Activated CD4-positive, alpha-beta memory T cell treated with anti-CD3 and anti-CD28 coated beads, Interleukin-2, amount 10 ng/mL, durations not matched to agents 7 days and 5 days (primary cell): ENCODE measurements at regions of chr9 and their contacts with region 1.

Region 1: GRCh38 chr9:36873247-36873875 is 160.7 kb downstream of the PAX5 start:
- DNase-seq: peak; percentile 73
- H3K4me3 Mint-ChIP-seq: no peak overlapping the region
- H3K27ac Mint-ChIP-seq: no peak overlapping the region
- H3K4me1 Mint-ChIP-seq: no peaks in the 10 kb centered on the region
- H3K27me3 Mint-ChIP-seq: peaks cover 7% of the 10 kb centered on the region

Region 2: GRCh38 chr9:36530224-36530623 is 343.1 kb before region 1 on chr9:
- CTCF ChIA-PET with region 1: no interaction called
- POLR2A ChIA-PET with region 1: no interaction called
- DNase-seq: no peak
- H3K4me3 Mint-ChIP-seq: no peak overlapping the region
- H3K27ac Mint-ChIP-seq: no peak overlapping the region
- H3K4me1 Mint-ChIP-seq: no peaks in the 10 kb centered on the region
- H3K27me3 Mint-ChIP-seq: peaks cover 12% of the 10 kb centered on the region

Region 3: DNA sequence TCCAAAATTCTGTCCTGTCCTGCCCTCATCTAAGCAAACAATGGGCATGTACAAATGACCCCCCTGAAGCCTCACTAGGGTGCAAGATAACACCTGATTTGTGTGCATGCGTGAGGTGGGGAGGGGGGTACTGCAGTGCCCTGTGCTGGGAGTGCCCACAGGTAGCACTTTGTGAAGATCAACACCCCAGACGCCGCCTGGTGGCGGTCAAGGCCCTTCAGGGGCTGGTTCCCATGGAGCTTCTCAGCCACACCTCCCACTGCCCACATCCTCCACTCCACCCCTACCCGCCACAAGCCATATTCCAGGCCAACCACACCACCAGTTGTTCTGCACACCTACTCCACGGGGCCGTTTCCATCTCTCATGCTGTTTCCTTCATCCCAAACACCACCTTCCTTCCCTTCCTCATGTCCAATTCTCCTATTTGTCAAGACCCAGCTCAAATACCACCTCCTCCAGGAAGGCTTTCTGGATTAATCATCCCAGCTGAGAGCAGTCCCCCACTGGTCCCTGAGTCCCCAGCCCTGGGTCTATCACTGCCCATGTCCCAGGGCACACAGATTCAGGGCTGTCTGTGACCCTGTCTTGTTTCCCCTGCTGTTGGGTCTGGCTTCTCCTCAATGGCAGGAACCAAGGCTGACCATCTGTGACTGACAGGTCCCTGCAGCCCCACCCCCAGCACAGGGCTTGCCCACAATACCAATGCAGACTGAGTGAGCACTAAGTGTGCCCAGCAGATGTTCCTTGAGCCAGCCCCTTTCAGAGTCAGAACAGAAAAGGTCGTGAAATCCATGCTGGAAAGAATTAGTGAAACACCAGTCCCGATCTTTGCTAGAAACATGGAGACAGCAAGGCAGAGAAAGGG is 17.7 kb before region 1 on chr9:
- CTCF ChIA-PET with region 1: interaction called, 12 read pairs
- POLR2A ChIA-PET with region 1: no interaction called
- DNase-seq: peak; percentile 73
- H3K4me3 Mint-ChIP-seq: no peak overlapping the region
- H3K27ac Mint-ChIP-seq: no peak overlapping the region
- H3K4me1 Mint-ChIP-seq: peaks cover 12% of the 10 kb centered on the region
- H3K27me3 Mint-ChIP-seq: peaks cover 18% of the 10 kb centered on the region

Region 4: DNA sequence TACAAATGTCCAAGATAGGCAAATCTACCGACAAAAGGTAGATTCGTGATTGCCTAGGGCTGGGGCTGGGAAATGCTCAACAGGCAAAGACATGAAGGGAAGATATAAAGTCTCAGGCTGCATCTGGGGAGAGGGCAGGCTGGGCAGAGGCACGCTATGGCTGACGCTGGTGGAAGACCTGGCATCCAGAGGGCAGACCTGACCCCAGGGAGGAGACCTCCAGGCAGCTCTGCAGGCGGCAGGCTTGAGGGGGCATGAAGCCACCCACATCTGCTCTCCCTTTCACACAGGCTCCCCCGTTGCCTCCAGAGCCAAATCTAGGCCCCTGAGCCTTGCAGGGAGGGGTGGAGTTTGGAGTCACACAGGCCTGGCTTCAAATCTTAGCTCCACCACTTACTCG is 15.2 kb after region 1 on chr9:
- CTCF ChIA-PET with region 1: interaction called, 10 read pairs
- POLR2A ChIA-PET with region 1: no interaction called
- DNase-seq: no peak
- H3K4me3 Mint-ChIP-seq: no peak overlapping the region
- H3K27ac Mint-ChIP-seq: no peak overlapping the region
- H3K4me1 Mint-ChIP-seq: no peaks in the 10 kb centered on the region
- H3K27me3 Mint-ChIP-seq: peaks cover 26% of the 10 kb centered on the region

Region 5: GRCh38 chr9:36946653-36947052 is 73.3 kb after region 1 on chr9:
- CTCF ChIA-PET with region 1: no interaction called
- POLR2A ChIA-PET with region 1: no interaction called
- DNase-seq: no peak
- H3K4me3 Mint-ChIP-seq: no peak overlapping the region
- H3K27ac Mint-ChIP-seq: no peak overlapping the region
- H3K4me1 Mint-ChIP-seq: peaks cover 2% of the 10 kb centered on the region
- H3K27me3 Mint-ChIP-seq: peaks cover 20% of the 10 kb centered on the region

Region 6: GRCh38 chr9:36995927-36996705 is 122.8 kb after region 1 on chr9:
- CTCF ChIA-PET with region 1: interaction called, 67 read pairs
- POLR2A ChIA-PET with region 1: no interaction called
- DNase-seq: peak; percentile 61
- H3K4me3 Mint-ChIP-seq: no peak overlapping the region
- H3K27ac Mint-ChIP-seq: no peak overlapping the region
- H3K4me1 Mint-ChIP-seq: no peaks in the 10 kb centered on the region
- H3K27me3 Mint-ChIP-seq: peaks cover 32% of the 10 kb centered on the region

Region 7: DNA sequence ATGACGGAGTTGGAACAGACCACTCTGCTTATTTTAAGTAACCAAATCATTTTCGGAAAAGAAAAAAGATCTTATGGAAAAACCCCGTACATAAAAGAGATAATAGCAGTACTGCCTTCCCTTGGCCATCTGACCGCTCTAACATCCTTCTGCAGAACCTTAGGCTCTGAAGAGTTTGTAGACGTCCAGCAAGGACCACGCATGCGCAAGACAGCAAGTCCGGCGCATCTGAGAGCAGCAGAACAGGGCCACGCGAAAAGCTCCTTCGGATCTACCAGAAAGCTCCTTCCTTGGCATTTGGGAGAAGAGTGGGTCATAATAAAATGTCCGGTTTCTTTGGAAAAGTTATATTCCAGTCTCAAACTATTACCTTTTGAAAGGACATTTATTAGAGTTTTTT is 133.9 kb after region 1 on chr9:
- CTCF ChIA-PET with region 1: no interaction called
- POLR2A ChIA-PET with region 1: no interaction called
- DNase-seq: no peak
- H3K4me3 Mint-ChIP-seq: no peak overlapping the region
- H3K27ac Mint-ChIP-seq: no peak overlapping the region
- H3K4me1 Mint-ChIP-seq: no peaks in the 10 kb centered on the region
- H3K27me3 Mint-ChIP-seq: peaks cover 65% of the 10 kb centered on the region